Ovary (tissue), 10 donors: ENCODE measurements at regions of chr14 and their contacts with region 1.

Region 1: DNA sequence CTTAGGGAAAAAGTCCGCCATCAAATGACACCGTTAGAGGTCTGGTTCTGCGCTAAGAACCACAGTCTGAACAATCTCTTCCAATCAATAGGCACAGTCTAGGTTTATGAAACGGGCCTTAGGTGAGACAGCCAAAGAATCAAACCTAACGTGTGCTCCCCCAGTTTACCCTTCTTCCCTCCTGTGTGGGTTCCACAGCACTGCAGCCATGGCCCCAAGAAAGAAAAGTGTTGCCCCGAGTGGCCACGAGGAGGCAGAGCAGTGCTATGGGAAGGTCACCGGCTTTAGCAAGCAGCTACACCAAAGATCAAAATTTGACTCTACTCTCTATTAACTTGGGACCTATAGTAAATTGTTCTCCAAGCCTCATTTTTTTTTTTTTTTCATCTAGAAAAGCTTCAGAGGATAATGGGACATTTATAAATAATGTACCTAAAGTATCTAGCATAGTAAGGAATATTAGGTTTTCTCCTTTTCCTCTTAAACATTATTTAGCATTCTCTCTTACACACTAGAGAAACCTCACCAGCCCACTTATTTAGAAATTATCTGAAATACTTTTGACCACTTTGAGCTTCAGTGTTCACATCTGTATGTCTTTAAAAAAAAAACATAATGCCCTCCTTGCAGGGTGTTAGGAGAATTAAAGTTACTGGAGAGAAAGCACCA is 70.2 kb upstream of the GPHB5 start:
- DNase-seq: peak; percentile 33 to 75 (median 62)
- H3K4me3 ChIP-seq: no peak overlapping the region
- H3K27ac ChIP-seq: no peak overlapping the region
- H3K4me1 ChIP-seq: no peaks in the 10 kb centered on the region
- H3K27me3 ChIP-seq: no peaks in the 10 kb centered on the region
- CTCF ChIP-seq: peak; percentile 35 to 71 (median 51)
- EP300 ChIP-seq: no peak
- POLR2A ChIP-seq: no peak

Region 2: DNA sequence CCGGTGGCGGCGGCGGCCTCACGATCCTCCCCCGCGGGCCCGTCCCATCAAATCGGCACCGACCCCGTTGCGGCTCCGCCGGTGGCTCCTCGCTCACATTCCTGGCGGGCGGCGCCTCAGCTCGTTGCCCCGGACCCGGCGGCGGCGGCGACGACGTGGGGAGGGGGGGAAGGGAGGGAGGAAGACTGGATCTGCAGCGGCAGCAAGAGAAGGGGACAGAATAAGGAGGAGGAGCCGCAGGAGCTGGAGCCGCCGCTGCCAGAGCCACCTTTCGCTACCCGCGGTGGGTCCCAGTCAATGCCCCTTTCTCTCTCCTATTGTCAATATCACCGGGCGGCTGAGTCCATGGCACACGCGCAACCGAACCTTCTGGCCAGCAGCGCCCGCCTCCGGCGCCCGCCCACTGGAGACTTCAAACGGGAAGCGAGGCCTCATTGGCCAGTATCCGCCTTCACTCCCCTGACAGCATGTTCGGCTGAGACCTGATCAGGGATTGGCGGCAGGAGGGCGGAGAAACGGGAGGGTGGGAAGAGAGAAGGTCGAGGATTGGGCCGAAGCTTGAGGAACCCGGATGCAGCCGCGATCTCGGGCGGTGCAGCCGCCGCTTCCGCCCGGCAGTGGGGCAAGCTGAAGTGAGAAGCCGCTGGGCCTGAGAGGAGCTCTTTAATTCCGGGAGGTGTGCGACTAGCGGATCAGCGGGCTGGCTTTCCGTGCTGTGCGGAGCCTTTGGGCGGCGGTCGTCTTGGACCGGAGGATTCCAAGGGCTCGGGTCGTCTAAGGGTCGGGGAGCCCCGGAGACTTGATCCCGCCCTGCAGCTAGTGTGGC is 154.3 kb after region 1 on chr14 and contains the start of gene PPP2R5E:
- intact Hi-C with region 1: loop called (anchors 5 to 10 kb)
- DNase-seq: peak; percentile 97 to 98 (median 98)
- H3K4me3 ChIP-seq: peak within 1 kb of the TSS; percentile 72
- H3K27ac ChIP-seq: peak within 1 kb of the TSS; percentile 33 to 90
- H3K4me1 ChIP-seq: no peaks in the 10 kb centered on the region
- H3K27me3 ChIP-seq: no peaks in the 10 kb centered on the region
- CTCF ChIP-seq: peak in 1 of 3 donors; percentile 13
- EP300 ChIP-seq: no peak
- POLR2A ChIP-seq: peak; percentile 51
- total RNA-seq, gene PPP2R5E: 16.3 to 44.1 (median 36.2) TPM

Region 3: DNA sequence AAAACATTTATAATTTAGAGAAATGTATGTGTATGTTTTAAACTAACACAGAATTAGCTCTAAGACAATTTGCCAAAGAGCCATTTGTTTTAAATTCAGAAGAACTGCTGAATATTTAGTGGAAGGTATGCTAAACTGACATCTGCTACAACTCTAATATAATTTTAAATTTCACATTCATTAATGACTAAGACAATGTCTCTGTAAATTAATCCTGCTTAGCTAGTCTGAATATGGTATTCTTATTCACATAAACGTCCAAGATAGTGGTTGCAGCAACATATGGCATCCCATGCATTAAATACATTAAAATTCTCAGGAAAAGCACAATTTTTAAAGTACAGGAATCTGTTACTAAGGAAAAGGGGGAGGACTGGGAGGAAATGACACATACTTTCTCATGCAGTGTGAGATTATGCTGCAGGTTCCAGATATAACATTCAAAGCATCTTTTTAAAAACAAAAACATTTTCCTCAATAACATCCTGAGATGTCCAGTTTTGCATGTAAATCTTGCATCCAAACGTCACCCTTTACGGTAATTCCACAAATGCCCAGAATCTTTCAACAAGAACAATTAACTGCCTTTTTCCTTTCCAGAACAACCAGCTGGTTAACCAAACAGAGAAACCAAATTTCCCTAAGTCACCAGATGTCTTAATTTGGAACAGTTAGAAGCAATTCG is 225.9 kb after region 1 on chr14:
- intact Hi-C with region 1: loop called in 1 of 4 experiments (anchors 10 kb)
- DNase-seq: no peak
- H3K4me3 ChIP-seq: no peak overlapping the region
- H3K27ac ChIP-seq: no peak overlapping the region
- H3K4me1 ChIP-seq: peaks cover 2% of the 10 kb centered on the region
- H3K27me3 ChIP-seq: no peaks in the 10 kb centered on the region
- CTCF ChIP-seq: no peak
- EP300 ChIP-seq: no peak
- POLR2A ChIP-seq: no peak